ENCODE measurements at regions of chr14 and their contacts with region 1.

Region 1: DNA sequence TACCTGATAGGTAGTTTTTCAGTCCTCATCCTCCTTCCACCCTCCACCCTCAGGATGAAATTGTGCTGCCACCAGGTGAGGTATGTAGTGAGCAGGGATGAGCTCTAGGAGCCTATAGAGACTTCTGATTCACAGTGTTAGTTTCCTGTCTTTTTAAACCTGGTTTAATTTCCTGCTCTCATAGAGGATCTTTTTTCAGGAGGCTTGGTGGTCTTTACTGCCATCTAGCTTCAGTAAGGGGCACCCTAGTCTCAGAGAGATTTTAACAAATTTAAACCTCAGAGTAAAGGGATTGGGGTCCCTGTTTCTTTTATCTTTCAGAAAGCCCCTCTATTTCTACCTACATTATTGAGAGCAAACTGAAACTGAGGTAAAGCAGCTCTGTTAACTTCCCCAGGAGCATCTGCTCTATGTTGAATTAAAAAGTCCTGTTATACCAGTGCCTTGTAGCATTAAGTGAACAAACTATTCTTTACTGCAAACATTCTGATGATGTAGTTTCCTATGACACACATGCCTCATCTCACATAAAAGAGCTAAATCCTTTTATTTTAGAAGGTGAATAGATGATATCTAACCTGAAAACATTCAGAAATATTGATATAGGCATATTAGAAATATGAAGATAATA is 172.2 kb upstream of the DDHD1 start:
- DNase-seq: no peak
- H3K4me3 ChIP-seq: no peak overlapping the region
- H3K27ac ChIP-seq: no peak overlapping the region
- H3K4me1 ChIP-seq: peaks cover 0 to 4% (median 1%) of the 10 kb centered on the region in 4 experiments; a peak in 3 of 7 replicates
- H3K27me3 ChIP-seq: no peaks in the 10 kb centered on the region
- CTCF ChIP-seq: peak in 2 of 3 experiments; percentile 52; a peak in 3 of 4 replicates
- EP300 ChIP-seq: no peak
- POLR2A ChIP-seq: no peak
- RAD21 ChIP-seq: peak; percentile 65 to 71

Region 2: DNA sequence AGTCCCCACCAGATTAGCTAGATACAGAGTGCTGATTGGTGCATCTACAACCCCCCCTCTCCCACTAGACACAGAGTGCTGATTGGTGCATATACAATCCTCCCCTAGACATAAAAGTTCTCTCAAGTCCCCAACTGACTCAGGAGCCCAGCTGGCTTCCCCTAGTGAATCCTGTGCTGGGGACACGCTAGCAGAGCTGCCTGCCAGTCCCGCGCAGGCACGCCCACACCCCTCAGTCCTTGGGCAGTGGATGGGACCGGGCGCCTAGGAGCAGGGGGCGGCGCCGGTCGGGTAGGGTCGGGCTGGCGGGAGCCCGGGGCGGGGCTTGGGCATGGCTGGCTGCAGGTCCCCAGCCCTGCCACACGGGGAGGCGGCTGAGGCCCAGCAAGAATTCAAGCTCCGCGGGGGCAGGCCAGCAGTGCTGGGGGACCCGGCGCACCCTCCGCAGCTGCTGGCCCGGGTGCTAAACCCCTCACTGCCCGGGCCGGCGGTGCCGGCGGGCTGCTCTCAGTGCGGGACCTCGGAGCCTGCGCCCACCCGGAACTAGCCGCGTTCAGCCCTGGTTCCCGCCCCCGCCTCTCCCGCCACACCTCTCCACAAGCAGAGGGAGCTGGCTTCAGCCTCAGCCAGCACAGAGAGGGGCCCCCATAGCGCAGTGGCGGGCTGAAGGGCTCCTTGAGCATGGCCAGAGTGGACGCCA is 107.8 kb before region 1 on chr14:
- CTCF ChIA-PET with region 1: no interaction called
- POLR2A ChIA-PET with region 1: no interaction called
- DNase-seq: peak; percentile 77 to 94
- H3K4me3 ChIP-seq: peak overlapping the region; percentile 49 to 71 (median 54)
- H3K27ac ChIP-seq: no peak overlapping the region
- H3K4me1 ChIP-seq: no peaks in the 10 kb centered on the region; a peak in 1 of 7 replicates
- H3K27me3 ChIP-seq: no peaks in the 10 kb centered on the region
- CTCF ChIP-seq: peak; percentile 35 to 40 (median 38)
- EP300 ChIP-seq: 0 out of 3 replicates have a peak, but pooled peaks of 1 of the 2 experiments have one; percentile 38
- POLR2A ChIP-seq: peak; percentile 54 to 67
- RAD21 ChIP-seq: peak; percentile 22 to 28; a peak in 2 of 4 replicates

Region 3: GRCh38 chr14:53295985-53296582 is 29.2 kb before region 1 on chr14:
- CTCF ChIA-PET with region 1: interaction called, 17 read pairs
- POLR2A ChIA-PET with region 1: no interaction called
- DNase-seq: no peak
- H3K4me3 ChIP-seq: no peak overlapping the region
- H3K27ac ChIP-seq: no peak overlapping the region
- H3K4me1 ChIP-seq: no peaks in the 10 kb centered on the region
- H3K27me3 ChIP-seq: no peaks in the 10 kb centered on the region
- CTCF ChIP-seq: peak in 2 of 3 experiments; percentile 40 to 58; a peak in 2 of 4 replicates
- EP300 ChIP-seq: no peak
- POLR2A ChIP-seq: no peak
- RAD21 ChIP-seq: peak; percentile 38 to 42; a peak in 3 of 4 replicates

Region 4: DNA sequence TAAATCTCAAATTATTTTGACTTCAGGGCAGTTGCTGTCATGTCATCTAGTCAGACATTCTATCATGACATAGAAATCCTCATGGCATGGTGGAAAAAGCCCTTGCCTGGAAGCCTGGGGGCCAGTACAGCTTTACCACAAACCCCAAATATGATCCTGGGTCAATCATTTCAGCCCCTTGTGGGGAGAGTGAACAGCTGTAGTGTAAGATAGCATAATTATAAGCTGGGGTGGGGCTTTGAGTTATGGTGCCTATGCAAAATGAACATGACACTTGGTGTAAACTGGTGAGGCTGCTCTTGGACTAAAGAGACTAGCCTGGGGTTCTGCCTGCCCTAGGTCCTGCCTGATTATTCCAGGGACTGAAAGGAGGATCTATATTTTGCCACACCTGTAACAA is 35.5 kb after region 1 on chr14:
- CTCF ChIA-PET with region 1: interaction called, 10 read pairs
- POLR2A ChIA-PET with region 1: no interaction called
- DNase-seq: no peak
- H3K4me3 ChIP-seq: no peak overlapping the region
- H3K27ac ChIP-seq: no peak overlapping the region
- H3K4me1 ChIP-seq: peaks cover 0 to 8% (median 5%) of the 10 kb centered on the region in 4 experiments; a peak in 6 of 7 replicates
- H3K27me3 ChIP-seq: no peaks in the 10 kb centered on the region
- CTCF ChIP-seq: no peak
- EP300 ChIP-seq: no peak
- POLR2A ChIP-seq: no peak
- RAD21 ChIP-seq: no peak

Region 5: GRCh38 chr14:53399057-53399456 is 73.8 kb after region 1 on chr14:
- CTCF ChIA-PET with region 1: interaction called, 16 read pairs
- POLR2A ChIA-PET with region 1: no interaction called
- DNase-seq: peak; percentile 23 to 69
- H3K4me3 ChIP-seq: no peak overlapping the region
- H3K27ac ChIP-seq: no peak overlapping the region
- H3K4me1 ChIP-seq: no peaks in the 10 kb centered on the region
- H3K27me3 ChIP-seq: no peaks in the 10 kb centered on the region
- CTCF ChIP-seq: peak; percentile 34 to 64 (median 51)
- EP300 ChIP-seq: no peak
- POLR2A ChIP-seq: no peak
- RAD21 ChIP-seq: peak; percentile 52 to 64